ENCODE measurements at regions of chr11 and their contacts with region 1.

Region 1: GRCh38 chr11:121591405-121592033 is 138.8 kb upstream of the SORL1-AS1 start:
- DNase-seq: peak in 6 of 10 donors; percentile 50 to 92 (median 68)

Region 2: DNA sequence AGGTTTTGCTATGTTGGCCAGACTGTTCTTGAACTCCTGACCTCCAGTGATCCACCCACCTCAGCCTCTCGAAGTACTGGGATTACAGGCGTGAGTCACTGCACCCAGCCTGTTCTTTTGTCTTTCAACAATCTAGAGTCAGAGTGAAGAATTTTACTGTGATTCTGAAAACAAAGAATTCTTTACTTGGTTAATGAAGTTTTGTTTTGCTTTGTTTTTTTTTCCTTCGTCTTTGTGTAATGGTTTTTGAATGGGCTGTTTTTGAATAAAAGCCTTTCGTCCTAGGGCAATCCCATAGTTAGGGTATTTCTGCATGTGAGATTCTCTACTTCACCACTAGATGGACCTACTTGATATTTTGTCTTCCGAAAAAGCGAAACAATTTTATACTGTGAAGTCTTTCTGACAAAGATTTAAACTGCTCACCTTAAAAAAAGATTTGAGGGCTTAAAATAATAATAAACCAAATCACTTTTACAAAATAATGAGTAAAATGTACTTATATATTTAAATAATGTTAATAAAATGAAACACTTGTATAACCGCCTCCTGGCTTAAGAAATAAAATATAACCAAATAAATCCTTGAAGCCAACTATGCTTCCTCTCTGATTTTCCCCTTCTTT is 342.4 kb before region 1 on chr11:
- intact Hi-C with region 1: loop called (anchors 5 kb)
- DNase-seq: no peak

Region 3: DNA sequence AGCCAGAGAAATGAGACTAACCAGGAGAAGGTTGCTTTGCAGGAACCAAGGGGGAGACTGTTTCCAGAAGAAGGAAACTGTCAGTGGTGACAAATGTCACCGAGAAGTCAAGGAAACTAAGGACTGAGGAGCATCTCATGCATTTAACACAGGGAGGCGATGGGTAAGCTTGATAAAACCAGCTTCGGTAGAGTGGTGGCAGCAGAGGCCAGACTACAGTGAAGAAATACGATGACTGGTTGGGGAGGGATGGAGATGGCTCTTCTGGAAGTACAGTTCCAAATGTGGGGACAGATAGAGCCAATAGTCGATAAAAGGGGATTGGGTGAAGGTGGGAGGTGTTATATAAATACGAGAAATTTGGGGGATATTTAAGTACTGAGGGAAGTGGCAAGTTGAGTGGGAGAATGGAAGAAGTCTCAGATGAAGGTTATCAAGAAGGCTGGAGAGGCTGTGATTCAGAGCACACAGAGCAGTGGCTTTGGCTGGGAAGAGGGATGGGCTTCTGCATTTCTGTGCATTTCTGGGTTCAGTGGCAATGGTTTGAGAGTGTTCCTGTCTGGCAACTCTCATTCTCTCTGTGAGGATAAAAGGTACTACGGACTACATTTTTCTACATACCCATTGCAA is 269.8 kb before region 1 on chr11:
- intact Hi-C with region 1: loop called (anchors 1 kb)
- DNase-seq: peak; percentile 24 to 94 (median 67)

Region 4: GRCh38 chr11:121451986-121452608 is 139.4 kb before region 1 on chr11 and contains the start of gene SORL1:
- intact Hi-C with region 1: loop called (anchors 10 kb)
- DNase-seq: peak; percentile 73 to 97 (median 83)